ENCODE measurements at regions of chr6 and their contacts with region 1.

Region 1: DNA sequence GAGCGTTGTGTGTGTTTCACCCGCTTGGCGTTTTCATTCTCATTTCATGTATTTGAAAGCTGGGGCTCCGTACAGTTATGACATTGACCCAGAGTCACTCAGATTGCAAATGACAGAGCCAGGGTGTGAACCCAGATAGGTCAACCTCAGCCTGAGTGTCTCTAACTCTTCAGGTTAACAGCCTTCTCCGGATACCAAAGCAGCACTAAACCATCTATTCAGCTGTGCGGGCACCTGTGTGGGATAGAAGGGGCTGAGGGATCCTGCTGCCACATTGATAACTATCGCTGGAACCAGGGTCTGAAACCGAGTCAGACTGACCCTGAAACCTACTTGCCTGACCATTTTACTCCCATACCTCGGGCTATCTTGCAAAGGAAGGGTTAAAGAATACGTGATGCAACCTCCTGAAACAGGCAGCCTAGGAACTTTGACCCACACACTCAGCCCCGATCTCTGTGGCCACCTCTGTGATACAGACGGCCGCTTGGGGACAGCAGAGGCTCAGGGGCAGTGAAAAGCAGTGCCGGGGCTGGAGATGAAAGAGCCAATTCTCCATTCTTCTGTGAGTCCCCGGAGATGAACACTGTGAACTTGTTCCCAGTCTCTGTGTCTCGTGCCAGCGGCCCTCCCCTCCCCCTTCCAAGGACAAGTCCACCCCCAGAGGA is 233.5 kb upstream of the QKI start:
- DNase-seq: peak; percentile 91
- ATAC-seq: peak; percentile 100
- H3K4me3 ChIP-seq: peak overlapping the region in 1 of 3 experiments; percentile 24; a peak in 2 of 6 replicates
- H3K27ac ChIP-seq: peak overlapping the region; percentile 4
- H3K4me1 ChIP-seq: peaks cover 18% of the 10 kb centered on the region
- H3K27me3 ChIP-seq: peaks cover 0 to 12% of the 10 kb centered on the region in 2 experiments; a peak in 4 of 5 replicates
- CTCF ChIP-seq: peak; percentile 99
- EP300 ChIP-seq: peak; percentile 79 to 89
- POLR2A ChIP-seq: no peak
- RAD21 ChIP-seq: peak; percentile 99

Region 2: GRCh38 chr6:163085426-163085825 is 95.6 kb before region 1 on chr6:
- CTCF ChIA-PET with region 1: no interaction called
- POLR2A ChIA-PET with region 1: no interaction called
- in situ Hi-C with region 1: no loop called
- intact Hi-C with region 1: no loop called
- DNase-seq: no peak
- ATAC-seq: no peak
- H3K4me3 ChIP-seq: no peak overlapping the region
- H3K27ac ChIP-seq: no peak overlapping the region
- H3K4me1 ChIP-seq: no peaks in the 10 kb centered on the region
- H3K27me3 ChIP-seq: no peaks in the 10 kb centered on the region
- CTCF ChIP-seq: no peak
- EP300 ChIP-seq: no peak
- POLR2A ChIP-seq: no peak
- RAD21 ChIP-seq: no peak

Region 3: GRCh38 chr6:163132050-163132750 is 48.8 kb before region 1 on chr6:
- CTCF ChIA-PET with region 1: no interaction called
- POLR2A ChIA-PET with region 1: no interaction called
- in situ Hi-C with region 1: no loop called
- intact Hi-C with region 1: no loop called
- DNase-seq: no peak
- ATAC-seq: no peak
- H3K4me3 ChIP-seq: no peak overlapping the region
- H3K27ac ChIP-seq: no peak overlapping the region
- H3K4me1 ChIP-seq: no peaks in the 10 kb centered on the region
- H3K27me3 ChIP-seq: no peaks in the 10 kb centered on the region; a peak in 1 of 5 replicates
- CTCF ChIP-seq: no peak
- EP300 ChIP-seq: no peak
- POLR2A ChIP-seq: no peak
- RAD21 ChIP-seq: no peak

Region 4: DNA sequence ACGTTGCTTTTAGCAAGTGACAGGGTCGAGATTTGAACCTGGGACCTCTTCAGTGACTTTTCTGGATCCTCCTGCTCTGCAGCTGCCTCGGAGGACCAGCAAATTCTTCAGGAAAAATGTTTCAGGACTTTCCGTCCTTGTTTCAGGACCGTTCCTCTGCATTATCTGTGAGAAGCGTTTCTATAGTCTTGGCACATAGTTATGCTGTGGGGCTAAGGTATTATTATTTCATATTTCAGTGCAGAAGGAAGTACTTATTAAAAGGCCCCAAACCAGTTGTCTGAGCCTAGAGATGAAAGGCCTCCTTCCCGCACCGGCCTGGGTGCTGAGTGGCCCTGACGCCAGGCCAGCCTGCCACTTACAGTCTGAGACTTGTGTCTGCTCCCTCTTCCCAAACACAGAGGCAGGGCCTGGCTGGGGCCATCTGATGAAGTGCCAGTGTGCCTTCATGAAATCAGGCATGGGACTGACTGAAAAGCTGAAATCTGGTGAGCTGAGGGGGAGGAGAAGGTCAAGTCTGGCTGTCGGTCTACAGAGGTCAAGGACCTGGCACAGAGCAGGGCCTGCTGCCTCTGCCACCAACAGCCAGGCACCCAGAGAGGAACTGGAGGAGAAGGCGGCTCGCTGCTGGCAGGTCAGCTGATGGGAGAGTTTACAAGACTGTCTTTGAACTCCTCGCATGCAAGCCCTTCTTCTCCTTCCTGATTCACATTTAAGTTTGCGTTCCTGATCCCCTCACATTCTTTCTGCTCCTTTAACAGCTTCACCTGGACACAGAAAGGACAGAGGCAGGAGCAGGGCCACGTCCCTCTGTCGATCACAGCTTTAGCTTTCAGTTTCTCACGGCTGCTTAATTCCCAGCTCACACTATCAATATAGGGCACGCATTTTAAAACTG is 224.7 kb after region 1 on chr6:
- CTCF ChIA-PET with region 1: no interaction called
- POLR2A ChIA-PET with region 1: no interaction called
- in situ Hi-C with region 1: loop called (anchors 5 kb)
- intact Hi-C with region 1: loop called (anchors 2 kb)
- DNase-seq: peak; percentile 50
- ATAC-seq: peak; percentile 76
- H3K4me3 ChIP-seq: peak overlapping the region; percentile 62 to 77 (median 68)
- H3K27ac ChIP-seq: peak overlapping the region; percentile 34
- H3K4me1 ChIP-seq: peaks cover 72% of the 10 kb centered on the region
- H3K27me3 ChIP-seq: no peaks in the 10 kb centered on the region
- CTCF ChIP-seq: 0 out of 2 replicates have a peak, but pooled peaks have one; percentile 9
- EP300 ChIP-seq: peak in 1 of 2 experiments; percentile 23; a peak in 1 of 4 replicates
- POLR2A ChIP-seq: 0 out of 4 replicates have a peak, but pooled peaks of 1 of the 2 experiments have one; percentile 50
- RAD21 ChIP-seq: 0 out of 2 replicates have a peak, but pooled peaks have one; percentile 8

Region 5: GRCh38 chr6:163554663-163555062 is 373.7 kb after region 1 on chr6:
- CTCF ChIA-PET with region 1: interaction called, 3 read pairs
- POLR2A ChIA-PET with region 1: no interaction called
- in situ Hi-C with region 1: loop called (anchors 10 kb)
- intact Hi-C with region 1: loop called (anchors 1 kb)
- DNase-seq: peak; percentile 66
- ATAC-seq: peak; percentile 84
- H3K4me3 ChIP-seq: no peak overlapping the region
- H3K27ac ChIP-seq: no peak overlapping the region
- H3K4me1 ChIP-seq: no peaks in the 10 kb centered on the region
- H3K27me3 ChIP-seq: no peaks in the 10 kb centered on the region
- CTCF ChIP-seq: peak; percentile 81
- EP300 ChIP-seq: no peak
- POLR2A ChIP-seq: no peak
- RAD21 ChIP-seq: peak; percentile 63

Region 6: GRCh38 chr6:163956571-163957407 is 775.8 kb after region 1 on chr6:
- CTCF ChIA-PET with region 1: interaction called, 7 read pairs
- POLR2A ChIA-PET with region 1: no interaction called
- in situ Hi-C with region 1: loop called (anchors 5 kb)
- intact Hi-C with region 1: loop called (anchors 1 kb)
- DNase-seq: peak; percentile 82
- ATAC-seq: peak; percentile 98
- H3K4me3 ChIP-seq: no peak overlapping the region
- H3K27ac ChIP-seq: no peak overlapping the region
- H3K4me1 ChIP-seq: no peaks in the 10 kb centered on the region
- H3K27me3 ChIP-seq: peaks cover 0 to 36% of the 10 kb centered on the region in 2 experiments; a peak in 2 of 5 replicates
- CTCF ChIP-seq: peak; percentile 93
- EP300 ChIP-seq: peak in 1 of 2 experiments; percentile 24; a peak in 1 of 4 replicates
- POLR2A ChIP-seq: no peak
- RAD21 ChIP-seq: peak; percentile 86

Region 7: GRCh38 chr6:164106345-164106769 is 925.3 kb after region 1 on chr6:
- CTCF ChIA-PET with region 1: no interaction called
- POLR2A ChIA-PET with region 1: no interaction called
- in situ Hi-C with region 1: loop called (anchors 25 kb)
- intact Hi-C with region 1: loop called (anchors 5 kb)
- DNase-seq: peak; percentile 16
- ATAC-seq: peak; percentile 83
- H3K4me3 ChIP-seq: peak overlapping the region in 1 of 3 experiments; percentile 17; a peak in 1 of 6 replicates
- H3K27ac ChIP-seq: no peak overlapping the region
- H3K4me1 ChIP-seq: peaks cover 6% of the 10 kb centered on the region; the same call in 1 of the 2 replicates
- H3K27me3 ChIP-seq: peaks cover 0 to 30% of the 10 kb centered on the region in 2 experiments; a peak in 3 of 5 replicates
- CTCF ChIP-seq: peak; percentile 76
- EP300 ChIP-seq: no peak
- POLR2A ChIP-seq: no peak
- RAD21 ChIP-seq: peak; percentile 43; the same call in 1 of the 2 replicates

Region 8: GRCh38 chr6:164927288-164928056 is 1746.5 kb after region 1 on chr6:
- CTCF ChIA-PET with region 1: no interaction called
- POLR2A ChIA-PET with region 1: no interaction called
- in situ Hi-C with region 1: no loop called
- intact Hi-C with region 1: loop called (anchors 5 kb)
- DNase-seq: peak; percentile 18
- ATAC-seq: peak; percentile 97
- H3K4me3 ChIP-seq: no peak overlapping the region
- H3K27ac ChIP-seq: no peak overlapping the region
- H3K4me1 ChIP-seq: no peaks in the 10 kb centered on the region
- H3K27me3 ChIP-seq: no peaks in the 10 kb centered on the region
- CTCF ChIP-seq: peak; percentile 94
- EP300 ChIP-seq: no peak
- POLR2A ChIP-seq: no peak
- RAD21 ChIP-seq: peak; percentile 91